ENCODE measurements at regions of chr10 and their contacts with region 1.

Region 1: GRCh38 chr10:27235706-27236105 is 4.9 kb downstream of the ACBD5 start:
- DNase-seq: no peak
- ATAC-seq: no peak
- H3K4me3 ChIP-seq: no peak overlapping the region
- H3K27ac ChIP-seq: peak overlapping the region; percentile 10 to 76; a peak in 3 of 6 replicates
- H3K4me1 ChIP-seq: peaks cover 51% of the 10 kb centered on the region
- CTCF ChIP-seq: no peak
- EP300 ChIP-seq: no peak
- POLR2A ChIP-seq: no peak
- RAD21 ChIP-seq: no peak

Region 2: DNA sequence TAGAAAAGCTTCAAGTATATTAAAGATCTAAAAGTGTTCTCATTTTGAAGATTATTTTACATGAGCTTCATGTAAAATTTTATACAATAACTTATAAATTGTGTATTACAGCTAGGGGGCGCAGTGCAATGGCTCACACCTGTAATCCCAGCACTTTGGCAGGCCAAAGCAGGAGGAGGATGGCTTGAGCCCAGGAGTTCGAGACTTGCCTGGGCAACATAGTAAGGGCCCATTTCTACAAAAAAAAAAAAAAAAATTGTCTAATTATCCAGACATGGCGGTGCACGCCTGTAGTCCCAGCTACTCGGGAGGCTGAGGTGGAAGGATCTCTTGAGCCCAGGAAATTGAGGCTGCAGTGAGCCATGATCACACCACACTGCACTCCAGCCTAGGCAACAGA is 11.7 kb before region 1 on chr10:
- CTCF ChIA-PET with region 1: interaction called, 14 read pairs
- POLR2A ChIA-PET with region 1: interaction called, 3 read pairs
- DNase-seq: peak in 1 of 2 experiments; percentile 73
- ATAC-seq: peak; percentile 19 to 90; a peak in 3 of 6 replicates
- H3K4me3 ChIP-seq: no peak overlapping the region
- H3K27ac ChIP-seq: no peak overlapping the region
- H3K4me1 ChIP-seq: no peaks in the 10 kb centered on the region
- CTCF ChIP-seq: peak; percentile 72
- EP300 ChIP-seq: no peak
- POLR2A ChIP-seq: no peak
- RAD21 ChIP-seq: peak; percentile 33 to 55; a peak in 4 of 5 replicates